GM13976 (cell line): ENCODE measurements at regions of chr12 and their contacts with region 1.

Region 1: DNA sequence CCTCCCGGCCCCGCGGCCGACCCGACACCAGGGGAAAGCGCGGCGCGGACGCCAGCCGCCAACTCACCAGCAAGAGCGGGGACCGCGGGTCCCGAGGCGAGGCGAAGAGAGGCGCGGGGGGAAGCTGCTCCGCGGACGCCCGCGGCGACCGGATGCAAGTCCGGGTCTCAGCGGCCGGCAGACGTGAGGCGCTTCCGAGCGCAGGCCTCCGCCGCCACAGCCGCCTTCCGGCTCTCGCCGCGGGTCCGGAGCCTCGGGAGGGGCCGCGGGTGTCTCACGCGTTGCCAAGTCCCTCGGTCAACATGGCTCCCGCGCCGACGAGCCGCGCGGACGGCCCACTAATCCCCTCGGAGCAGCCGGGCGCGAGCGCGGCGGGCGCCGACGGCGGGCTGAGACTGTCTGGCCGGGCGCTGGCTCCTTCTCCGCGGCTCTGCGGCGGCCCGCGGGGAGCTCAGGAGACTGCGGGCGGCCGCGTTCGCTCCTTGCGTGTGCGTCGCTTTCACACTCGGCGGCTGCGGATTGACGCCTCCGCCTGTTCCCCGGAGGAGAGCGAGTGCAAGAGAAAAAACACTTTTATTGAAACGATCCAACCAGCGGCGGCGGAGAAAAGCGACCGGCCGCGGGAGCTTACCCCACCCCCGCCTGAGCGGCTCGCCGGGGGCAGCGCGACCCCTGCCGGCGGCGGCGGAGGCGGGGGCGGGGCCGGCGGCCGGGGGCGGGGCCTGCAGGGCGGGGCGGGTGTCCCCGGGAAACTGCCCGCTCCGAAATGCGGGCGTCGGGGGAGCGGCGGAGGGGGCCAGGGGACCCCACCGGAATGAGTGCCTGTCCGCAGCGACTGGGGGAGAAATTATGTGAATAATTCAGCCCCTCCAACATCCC is at the start of gene CDK17:
- DNase-seq: peak; percentile 89
- CTCF ChIP-seq: peak; percentile 48

Region 2: DNA sequence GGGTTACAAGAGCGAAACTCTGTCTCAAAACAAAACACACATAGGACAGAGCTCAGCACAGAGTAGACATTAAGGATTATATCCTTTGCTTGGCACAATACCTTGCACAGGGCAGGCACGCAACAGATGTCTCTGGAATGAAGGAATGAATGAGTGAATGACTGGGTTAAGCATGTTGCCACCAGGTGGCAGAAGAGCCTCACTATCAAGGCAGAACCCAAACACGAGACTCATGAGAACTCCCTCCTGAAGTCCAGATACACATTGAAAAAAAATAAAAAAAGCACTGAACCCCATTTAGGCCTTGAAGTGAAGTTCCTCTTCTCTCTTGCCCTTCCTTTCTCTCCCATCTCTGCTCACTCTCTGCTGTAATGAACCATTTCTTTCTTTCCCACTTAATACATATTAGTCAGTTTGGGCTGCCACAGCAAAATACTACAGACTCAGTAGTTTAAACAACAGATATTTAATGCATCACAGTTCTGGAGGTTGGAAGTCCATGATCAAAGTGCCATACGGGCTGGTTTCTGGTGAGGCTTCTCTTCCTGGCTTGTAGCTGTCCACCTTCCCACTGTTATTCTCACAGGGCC is 338.2 kb before region 1 on chr12:
- in situ Hi-C with region 1: loop called (anchors 25 kb)
- DNase-seq: peak; percentile 79
- CTCF ChIP-seq: peak; percentile 75

Region 3: DNA sequence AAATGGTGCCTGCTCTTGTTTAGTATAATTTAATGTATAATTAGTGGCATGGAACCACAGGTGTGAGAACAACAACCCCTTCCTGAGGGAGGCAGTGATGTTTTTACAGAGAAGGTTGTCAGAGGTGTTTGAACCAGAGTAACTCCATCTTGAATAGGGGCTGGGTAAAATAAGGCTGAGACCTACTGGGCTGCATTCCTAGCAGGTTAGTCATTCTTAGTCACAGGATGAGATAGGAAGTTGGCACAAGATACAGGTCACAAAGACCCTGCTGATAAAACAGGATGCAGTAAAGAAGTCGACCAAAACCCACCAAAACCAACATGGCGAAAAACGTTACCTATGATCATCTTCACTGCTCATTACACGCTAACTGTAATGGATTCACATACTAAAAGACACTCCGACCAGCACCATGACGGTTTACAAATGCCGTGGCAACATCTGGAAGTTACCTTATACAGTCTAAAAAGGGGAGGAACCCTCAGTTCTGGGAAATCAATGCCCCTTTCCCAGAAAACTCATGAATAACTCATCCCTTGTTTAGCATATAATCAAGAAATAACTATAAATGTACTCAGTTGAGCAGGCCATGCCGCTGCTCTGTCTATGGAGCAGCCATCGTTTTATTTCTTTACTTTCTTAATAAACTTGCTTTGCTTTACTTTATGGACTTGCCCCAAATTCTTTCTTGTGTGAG is 317.0 kb before region 1 on chr12:
- in situ Hi-C with region 1: no loop called
- DNase-seq: no peak
- CTCF ChIP-seq: no peak

Region 4: GRCh38 chr12:96489103-96490056 is 89.2 kb after region 1 on chr12 and contains the start of gene CFAP54:
- in situ Hi-C with region 1: loop called (anchors 10 kb)
- DNase-seq: peak; percentile 93
- CTCF ChIP-seq: peak; percentile 94